ENCODE measurements at regions of chr11 and their contacts with region 1.

Region 1: DNA sequence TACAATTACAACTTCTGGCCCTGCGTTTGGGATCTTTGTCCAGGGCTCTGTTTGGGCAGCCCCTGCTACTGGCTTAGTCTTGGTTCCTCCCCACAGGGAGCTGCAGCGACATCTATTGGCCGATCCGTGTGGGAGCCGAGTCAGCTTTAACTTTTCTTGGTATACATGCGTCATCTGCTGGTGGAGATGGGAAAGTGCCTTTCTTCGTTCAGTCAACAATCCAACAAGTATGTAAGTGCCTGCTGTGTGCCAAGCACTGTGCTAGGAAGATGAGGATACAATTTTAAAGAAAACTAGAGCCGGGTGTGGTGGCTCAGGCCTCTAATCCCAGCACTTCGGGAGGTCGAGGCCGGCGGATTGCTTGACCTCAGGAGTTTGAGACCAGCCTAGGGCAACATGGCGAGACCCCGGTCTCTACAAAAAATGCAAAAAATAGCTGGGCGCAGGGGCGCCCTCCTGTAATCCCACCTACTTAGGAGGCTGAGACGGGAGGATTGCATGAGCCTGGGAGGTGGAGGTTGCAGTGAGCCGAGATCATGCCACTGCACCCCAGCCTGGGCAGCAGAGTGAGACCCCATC is 8.2 kb downstream of the TPBGL start:
- DNase-seq: peak; percentile 81
- H3K4me3 Mint-ChIP-seq: no peak overlapping the region
- H3K27ac Mint-ChIP-seq: no peak overlapping the region
- H3K4me1 Mint-ChIP-seq: peaks cover 6% of the 10 kb centered on the region
- H3K27me3 Mint-ChIP-seq: peaks cover 25% of the 10 kb centered on the region

Region 2: GRCh38 chr11:74702383-74703007 is 546.3 kb before region 1 on chr11:
- intact Hi-C with region 1: loop called (anchors 1 kb)
- DNase-seq: peak; percentile 26
- H3K4me3 Mint-ChIP-seq: no peak overlapping the region
- H3K27ac Mint-ChIP-seq: no peak overlapping the region
- H3K4me1 Mint-ChIP-seq: peaks cover 2% of the 10 kb centered on the region
- H3K27me3 Mint-ChIP-seq: peaks cover 7% of the 10 kb centered on the region

Region 3: GRCh38 chr11:75022759-75023396 is 225.9 kb before region 1 on chr11:
- intact Hi-C with region 1: loop called (anchors 1 kb)
- DNase-seq: peak; percentile 60
- H3K4me3 Mint-ChIP-seq: no peak overlapping the region
- H3K27ac Mint-ChIP-seq: no peak overlapping the region
- H3K4me1 Mint-ChIP-seq: no peaks in the 10 kb centered on the region
- H3K27me3 Mint-ChIP-seq: no peaks in the 10 kb centered on the region

Region 4: GRCh38 chr11:75160192-75160757 is 88.5 kb before region 1 on chr11:
- intact Hi-C with region 1: no loop called
- DNase-seq: no peak
- H3K4me3 Mint-ChIP-seq: no peak overlapping the region
- H3K27ac Mint-ChIP-seq: no peak overlapping the region
- H3K4me1 Mint-ChIP-seq: peaks cover 10% of the 10 kb centered on the region
- H3K27me3 Mint-ChIP-seq: peaks cover 4% of the 10 kb centered on the region

Region 5: DNA sequence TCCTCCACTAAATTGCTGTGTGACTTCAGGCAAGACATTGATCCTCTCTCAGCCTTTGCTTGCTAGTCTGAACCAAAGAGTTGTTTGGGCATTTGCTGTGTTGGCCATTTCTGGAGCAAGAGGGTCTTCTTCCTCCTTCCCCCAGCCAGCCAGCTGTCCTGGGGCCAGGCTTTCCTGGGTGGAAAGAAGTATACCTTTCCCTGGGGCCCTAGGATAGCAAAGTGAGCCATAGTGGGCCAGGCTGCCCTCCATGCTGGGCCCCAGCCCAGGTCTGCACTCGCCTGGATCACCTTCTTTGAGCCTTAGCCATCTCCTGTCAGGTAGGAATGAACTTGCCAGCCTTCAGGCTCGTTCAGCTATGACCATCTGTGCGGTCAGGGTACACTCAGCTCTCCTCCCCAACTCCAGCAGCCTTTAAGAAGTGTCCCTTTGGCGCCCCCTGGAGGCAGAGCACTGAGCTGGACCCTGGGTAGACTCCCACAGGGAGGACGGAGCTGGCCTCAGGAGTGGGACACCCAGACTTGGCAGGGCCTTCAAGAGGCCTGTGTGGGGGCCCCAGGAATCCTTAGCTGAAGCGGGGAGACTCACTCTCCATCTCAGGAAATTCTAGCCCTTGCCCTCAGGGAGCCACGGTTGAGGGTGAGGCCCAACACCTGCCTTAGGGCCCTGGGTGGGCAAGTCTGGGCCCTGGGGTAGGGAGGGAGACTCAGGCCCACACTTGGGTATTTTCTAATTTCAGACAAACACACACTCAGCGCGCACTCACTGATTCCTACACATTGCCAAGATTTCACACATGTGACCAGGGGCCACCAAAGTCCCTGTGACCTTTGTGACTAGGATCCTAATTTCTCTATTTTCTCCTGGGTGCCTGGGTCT is 43.9 kb before region 1 on chr11:
- intact Hi-C with region 1: loop called (anchors 2 kb)
- DNase-seq: peak; percentile 76
- H3K4me3 Mint-ChIP-seq: no peak overlapping the region
- H3K27ac Mint-ChIP-seq: no peak overlapping the region
- H3K4me1 Mint-ChIP-seq: no peaks in the 10 kb centered on the region
- H3K27me3 Mint-ChIP-seq: peaks cover 6% of the 10 kb centered on the region

Region 6: GRCh38 chr11:75214411-75214821 is 34.4 kb before region 1 on chr11:
- intact Hi-C with region 1: loop called (anchors 2 kb)
- DNase-seq: peak; percentile 68
- H3K4me3 Mint-ChIP-seq: no peak overlapping the region
- H3K27ac Mint-ChIP-seq: no peak overlapping the region
- H3K4me1 Mint-ChIP-seq: peaks cover 5% of the 10 kb centered on the region
- H3K27me3 Mint-ChIP-seq: peaks cover 10% of the 10 kb centered on the region

Region 7: GRCh38 chr11:75508044-75508561 is 259.3 kb after region 1 on chr11:
- intact Hi-C with region 1: no loop called
- DNase-seq: no peak
- H3K4me3 Mint-ChIP-seq: no peak overlapping the region
- H3K27ac Mint-ChIP-seq: peak overlapping the region; percentile 62
- H3K4me1 Mint-ChIP-seq: peaks cover 9% of the 10 kb centered on the region
- H3K27me3 Mint-ChIP-seq: peaks cover 2% of the 10 kb centered on the region

Measured in activated T-helper 1 cell treated with anti-CD3 and anti-CD28 coated beads, Interleukin-12 subunit alpha, Interleukin-12 subunit beta, Interleukin-2, Interleukin-4 antibody, amounts not matched to agents 30 ng/mL and 10 ng/mL and 1 ng/mL, durations not matched to agents 14 hours and 24 hours and 36 hours (primary cell).